Vagina (tissue), 2 donors: ENCODE measurements at regions of chr3 and their contacts with region 1.

Region 1: GRCh38 chr3:156509189-156510174 is 45.4 kb downstream of the SSR3 start:
- DNase-seq: no peak
- H3K4me3 ChIP-seq: no peak overlapping the region
- H3K27ac ChIP-seq: no peak overlapping the region
- H3K4me1 ChIP-seq: no peaks in the 10 kb centered on the region
- H3K27me3 ChIP-seq: no peaks in the 10 kb centered on the region
- CTCF ChIP-seq: peak in 2 of 3 experiments; percentile 57
- POLR2A ChIP-seq: no peak

Region 2: GRCh38 chr3:156151824-156152428 is 357.6 kb before region 1 on chr3:
- intact Hi-C with region 1: loop called (anchors 10 kb)
- DNase-seq: no peak
- H3K4me3 ChIP-seq: no peak overlapping the region
- H3K27ac ChIP-seq: no peak overlapping the region
- H3K4me1 ChIP-seq: peaks cover 25% of the 10 kb centered on the region
- H3K27me3 ChIP-seq: no peaks in the 10 kb centered on the region
- CTCF ChIP-seq: peak in 2 of 3 experiments; percentile 25 to 35
- POLR2A ChIP-seq: no peak

Region 3: GRCh38 chr3:156424758-156425157 is 84.7 kb before region 1 on chr3:
- intact Hi-C with region 1: no loop called
- DNase-seq: no peak
- H3K4me3 ChIP-seq: no peak overlapping the region
- H3K27ac ChIP-seq: no peak overlapping the region
- H3K4me1 ChIP-seq: no peaks in the 10 kb centered on the region
- H3K27me3 ChIP-seq: no peaks in the 10 kb centered on the region
- CTCF ChIP-seq: no peak
- POLR2A ChIP-seq: no peak